Naive thymus-derived CD8-positive, alpha-beta T cell (primary cell): ENCODE measurements at regions of chr6 and their contacts with region 1.

Region 1: DNA sequence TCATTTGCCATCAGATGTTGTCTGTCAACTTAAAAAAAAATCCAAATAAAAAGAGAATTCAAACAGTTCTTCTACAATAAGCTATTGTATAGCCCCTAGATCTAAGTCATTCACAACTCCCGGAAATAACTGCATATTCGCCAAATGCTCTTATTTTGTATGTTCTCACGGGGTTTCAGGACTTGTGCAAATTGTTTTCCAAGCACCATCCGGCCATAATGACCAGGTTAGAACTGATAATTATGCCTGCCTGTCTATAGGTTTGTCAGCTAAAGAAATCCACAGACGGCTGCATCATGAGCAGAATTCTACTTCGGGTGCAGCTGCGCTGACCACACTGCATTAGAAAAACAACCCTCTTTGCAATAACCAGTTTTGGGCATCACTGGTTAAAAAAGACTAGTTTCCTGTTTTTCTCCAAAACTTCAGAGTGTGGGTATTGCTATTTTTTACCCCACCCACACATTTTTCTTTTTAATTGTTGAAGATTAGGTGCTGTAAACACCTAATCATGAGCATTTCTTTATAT is 87.7 kb downstream of the HIVEP2 start:
- DNase-seq: peak in 6 of 10 donors; percentile 23 to 72 (median 57)
- ATAC-seq: peak; percentile 45 to 48
- H3K4me3 Mint-ChIP-seq: peak overlapping the region; percentile 76 to 91 (median 86)
- H3K27ac Mint-ChIP-seq: peak overlapping the region; percentile 96 to 98 (median 97)
- H3K4me1 Mint-ChIP-seq: peaks cover 49 to 94% (median 92%) of the 10 kb centered on the region in 4 donors
- H3K27me3 Mint-ChIP-seq: no peaks in the 10 kb centered on the region

Region 2: DNA sequence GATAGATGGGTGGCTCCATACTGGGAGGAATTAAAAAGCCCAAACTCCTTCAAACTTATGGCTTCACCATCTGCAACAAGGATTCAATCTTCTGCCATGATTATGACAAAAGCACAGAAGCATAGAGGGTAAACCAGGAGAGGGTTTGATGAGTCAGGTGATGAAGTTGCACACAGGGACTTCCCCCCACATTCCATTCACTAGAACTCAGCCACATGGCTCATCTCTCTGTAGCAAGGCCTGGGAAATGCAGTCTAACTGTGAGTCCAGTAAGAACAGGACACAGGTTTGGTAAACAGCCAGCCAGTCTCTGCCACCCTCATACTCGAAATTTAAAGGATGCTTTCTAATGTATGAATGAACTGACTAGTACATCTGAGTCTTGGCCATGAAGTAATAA is 55.2 kb before region 1 on chr6:
- POLR2A ChIA-PET with region 1: no interaction called
- DNase-seq: no peak
- ATAC-seq: peak in 1 of 2 donors; percentile 48
- H3K4me3 Mint-ChIP-seq: no peak overlapping the region
- H3K27ac Mint-ChIP-seq: peak overlapping the region in 8 of 10 donors; percentile 21 to 69 (median 49)
- H3K4me1 Mint-ChIP-seq: peaks cover 41 to 93% (median 86%) of the 10 kb centered on the region in 4 donors
- H3K27me3 Mint-ChIP-seq: no peaks in the 10 kb centered on the region

Region 3: GRCh38 chr6:142819603-142820337 is 37.5 kb before region 1 on chr6:
- POLR2A ChIA-PET with region 1: interaction called, 11 read pairs
- DNase-seq: peak in 5 of 10 donors; percentile 17 to 45 (median 30)
- ATAC-seq: peak; percentile 52 to 74
- H3K4me3 Mint-ChIP-seq: peak overlapping the region; percentile 81 to 90 (median 88)
- H3K27ac Mint-ChIP-seq: peak overlapping the region; percentile 84 to 98 (median 95)
- H3K4me1 Mint-ChIP-seq: peaks cover 36 to 88% (median 80%) of the 10 kb centered on the region in 4 donors
- H3K27me3 Mint-ChIP-seq: no peaks in the 10 kb centered on the region

Region 4: DNA sequence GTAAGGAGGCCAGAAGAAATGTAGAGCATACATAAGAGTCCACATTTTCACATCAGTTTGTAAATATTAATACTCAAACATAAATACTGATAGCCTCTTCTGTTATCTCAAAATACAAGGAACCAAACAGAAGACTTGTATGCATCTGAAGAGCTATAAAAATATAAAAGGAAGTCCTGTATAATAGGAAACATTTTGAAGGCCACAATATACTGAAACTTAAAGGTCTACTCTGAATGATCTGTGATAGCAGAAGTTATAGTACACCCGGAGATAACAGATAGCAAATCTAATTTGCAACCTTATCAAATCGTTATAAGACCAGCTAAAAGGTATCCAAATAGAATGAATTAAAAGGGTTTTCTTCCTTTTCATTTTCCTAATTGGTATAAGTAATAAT is 23.5 kb before region 1 on chr6:
- POLR2A ChIA-PET with region 1: no interaction called
- DNase-seq: no peak
- ATAC-seq: no peak
- H3K4me3 Mint-ChIP-seq: peak overlapping the region in 1 of 10 donors; percentile 5
- H3K27ac Mint-ChIP-seq: peak overlapping the region in 7 of 10 donors; percentile 9 to 73 (median 33)
- H3K4me1 Mint-ChIP-seq: peaks cover 37 to 79% (median 72%) of the 10 kb centered on the region in 4 donors
- H3K27me3 Mint-ChIP-seq: no peaks in the 10 kb centered on the region

Region 5: DNA sequence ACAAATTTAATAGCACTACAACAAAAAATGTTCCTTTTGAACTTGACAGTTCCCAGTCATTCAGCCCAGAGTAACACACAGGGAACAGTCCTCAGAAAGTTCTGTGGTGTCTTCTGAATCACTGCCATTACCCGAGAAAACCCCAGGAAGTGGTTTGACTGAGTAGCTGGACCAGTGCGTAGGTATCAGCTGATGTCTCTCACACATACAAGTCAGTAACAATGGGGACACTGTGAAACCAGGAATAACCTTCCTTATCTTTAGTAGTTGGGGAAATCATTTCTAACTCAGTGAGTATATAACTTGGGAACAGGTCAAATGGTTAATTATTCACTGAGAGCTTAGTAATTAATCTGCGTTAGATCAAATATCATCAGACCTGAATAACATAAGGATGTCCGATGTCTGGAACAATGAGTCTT is 14.6 kb after region 1 on chr6:
- POLR2A ChIA-PET with region 1: interaction called, 13 read pairs
- DNase-seq: peak in 8 of 10 donors; percentile 34 to 68 (median 60)
- ATAC-seq: peak; percentile 87 to 96
- H3K4me3 Mint-ChIP-seq: peak overlapping the region in 9 of 10 donors; percentile 18 to 71 (median 54)
- H3K27ac Mint-ChIP-seq: peak overlapping the region; percentile 58 to 94 (median 86)
- H3K4me1 Mint-ChIP-seq: peaks cover 56 to 93% (median 87%) of the 10 kb centered on the region in 4 donors
- H3K27me3 Mint-ChIP-seq: no peaks in the 10 kb centered on the region

Region 6: GRCh38 chr6:142902636-142903053 is 45.3 kb after region 1 on chr6:
- POLR2A ChIA-PET with region 1: interaction called, 32 read pairs
- DNase-seq: peak; percentile 60 to 91 (median 84)
- ATAC-seq: peak; percentile 59 to 66
- H3K4me3 Mint-ChIP-seq: peak overlapping the region in 8 of 10 donors; percentile 59 to 84 (median 82)
- H3K27ac Mint-ChIP-seq: peak overlapping the region in 2 of 10 donors; percentile 95 to 98
- H3K4me1 Mint-ChIP-seq: peaks cover 26 to 69% (median 53%) of the 10 kb centered on the region in 4 donors
- H3K27me3 Mint-ChIP-seq: no peaks in the 10 kb centered on the region

Region 7: DNA sequence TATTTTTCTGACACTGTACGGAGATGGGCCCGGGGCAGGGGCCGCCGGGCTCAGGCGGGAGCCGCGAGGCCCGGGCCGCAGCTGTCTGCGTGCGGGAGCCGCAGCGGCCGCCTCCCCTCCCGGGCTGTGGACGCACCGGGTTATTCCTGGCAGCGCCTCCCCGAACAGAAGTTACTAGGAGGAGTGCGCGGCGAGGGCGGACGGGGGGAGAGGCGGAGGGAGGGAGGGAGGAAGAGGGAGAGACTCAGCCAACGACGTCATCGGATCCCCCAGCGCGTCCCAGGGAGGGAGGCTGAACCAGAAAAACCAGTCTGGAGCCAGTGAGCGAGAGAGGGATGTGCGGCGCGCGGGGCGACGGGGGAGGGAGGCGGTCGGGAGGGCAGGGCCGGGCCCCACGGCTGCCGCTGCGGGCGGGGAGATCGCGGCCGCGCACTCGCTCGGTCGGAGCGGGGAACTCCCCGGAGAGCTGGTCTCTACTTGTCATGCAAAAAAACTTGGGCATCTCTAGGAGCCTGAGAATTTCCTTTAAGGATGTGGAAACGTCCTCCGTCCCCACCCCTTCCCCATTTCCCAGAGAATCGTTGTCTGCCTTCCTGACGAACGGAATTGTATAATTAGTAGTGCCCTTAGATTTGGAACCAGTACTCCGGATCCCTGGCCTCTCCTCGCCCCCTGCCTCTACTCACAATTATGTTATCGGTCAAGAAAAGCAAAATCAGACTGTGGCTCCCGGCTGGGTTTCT is 89.1 kb after region 1 on chr6:
- POLR2A ChIA-PET with region 1: interaction called, 62 read pairs
- DNase-seq: peak; percentile 81 to 96 (median 92)
- ATAC-seq: peak; percentile 43 to 47
- H3K4me3 Mint-ChIP-seq: peak overlapping the region; percentile 87 to 100 (median 94)
- H3K27ac Mint-ChIP-seq: peak overlapping the region; percentile 96 to 100 (median 98)
- H3K4me1 Mint-ChIP-seq: peaks cover 22 to 50% (median 38%) of the 10 kb centered on the region in 4 donors
- H3K27me3 Mint-ChIP-seq: peaks cover 0 to 6% (median 0%) of the 10 kb centered on the region in 5 donors